CD4-positive, alpha-beta memory T cell (primary cell): ENCODE measurements at regions of chr3 and their contacts with region 1.

Region 1: GRCh38 chr3:48656061-48656840 is 6.4 kb downstream of the CELSR3 start:
- DNase-seq: peak; percentile 86 to 91 (median 88)
- H3K4me3 ChIP-seq: peak overlapping the region; percentile 29 to 59
- H3K4me3 Mint-ChIP-seq: peak overlapping the region; percentile 80 to 88 (median 84)
- H3K27ac ChIP-seq: peak overlapping the region; percentile 38
- H3K27ac Mint-ChIP-seq: peak overlapping the region; percentile 82 to 93 (median 88)
- H3K4me1 ChIP-seq: peaks cover 19% of the 10 kb centered on the region
- H3K4me1 Mint-ChIP-seq: peaks cover 5 to 31% (median 10%) of the 10 kb centered on the region in 4 donors
- H3K27me3 ChIP-seq: no peaks in the 10 kb centered on the region
- H3K27me3 Mint-ChIP-seq: peaks cover 0 to 3% of the 10 kb centered on the region in 2 donors

Region 2: GRCh38 chr3:48609088-48610005 is 46.9 kb before region 1 on chr3 and contains the start of gene UQCRC1:
- CTCF ChIA-PET with region 1: interaction called, 3 read pairs
- POLR2A ChIA-PET with region 1: interaction called, 4 read pairs
- intact Hi-C with region 1: loop called (anchors 1 kb)
- DNase-seq: peak; percentile 87 to 94 (median 93)
- H3K4me3 ChIP-seq: peak within 1 kb of the TSS; percentile 76 to 83
- H3K4me3 Mint-ChIP-seq: peak within 1 kb of the TSS; percentile 93 to 100 (median 98)
- H3K27ac ChIP-seq: peak within 1 kb of the TSS; percentile 89
- H3K27ac Mint-ChIP-seq: peak within 1 kb of the TSS; percentile 95 to 100 (median 98)
- H3K4me1 ChIP-seq: peaks cover 10% of the 10 kb centered on the region
- H3K4me1 Mint-ChIP-seq: peaks cover 12 to 24% (median 19%) of the 10 kb centered on the region in 4 donors
- H3K27me3 ChIP-seq: no peaks in the 10 kb centered on the region
- H3K27me3 Mint-ChIP-seq: no peaks in the 10 kb centered on the region
- total RNA-seq, gene UQCRC1: 73.7 to 91.3 TPM

Region 3: GRCh38 chr3:49434731-49435130 is 778.5 kb after region 1 on chr3:
- CTCF ChIA-PET with region 1: no interaction called
- POLR2A ChIA-PET with region 1: no interaction called
- intact Hi-C with region 1: no loop called
- DNase-seq: no peak
- H3K4me3 ChIP-seq: no peak overlapping the region
- H3K4me3 Mint-ChIP-seq: no peak overlapping the region
- H3K27ac ChIP-seq: no peak overlapping the region
- H3K27ac Mint-ChIP-seq: no peak overlapping the region
- H3K4me1 ChIP-seq: peaks cover 3% of the 10 kb centered on the region
- H3K4me1 Mint-ChIP-seq: peaks cover 0 to 3% (median 0%) of the 10 kb centered on the region in 4 donors
- H3K27me3 ChIP-seq: no peaks in the 10 kb centered on the region
- H3K27me3 Mint-ChIP-seq: no peaks in the 10 kb centered on the region